ENCODE measurements at regions of chr7 and their contacts with region 1.

Region 1: GRCh38 chr7:143240291-143241168 is 18.7 kb downstream of the TAS2R40 start:
- DNase-seq: peak; percentile 60
- H3K4me3 ChIP-seq: peak overlapping the region; percentile 21
- CTCF ChIP-seq: peak; percentile 76

Region 2: DNA sequence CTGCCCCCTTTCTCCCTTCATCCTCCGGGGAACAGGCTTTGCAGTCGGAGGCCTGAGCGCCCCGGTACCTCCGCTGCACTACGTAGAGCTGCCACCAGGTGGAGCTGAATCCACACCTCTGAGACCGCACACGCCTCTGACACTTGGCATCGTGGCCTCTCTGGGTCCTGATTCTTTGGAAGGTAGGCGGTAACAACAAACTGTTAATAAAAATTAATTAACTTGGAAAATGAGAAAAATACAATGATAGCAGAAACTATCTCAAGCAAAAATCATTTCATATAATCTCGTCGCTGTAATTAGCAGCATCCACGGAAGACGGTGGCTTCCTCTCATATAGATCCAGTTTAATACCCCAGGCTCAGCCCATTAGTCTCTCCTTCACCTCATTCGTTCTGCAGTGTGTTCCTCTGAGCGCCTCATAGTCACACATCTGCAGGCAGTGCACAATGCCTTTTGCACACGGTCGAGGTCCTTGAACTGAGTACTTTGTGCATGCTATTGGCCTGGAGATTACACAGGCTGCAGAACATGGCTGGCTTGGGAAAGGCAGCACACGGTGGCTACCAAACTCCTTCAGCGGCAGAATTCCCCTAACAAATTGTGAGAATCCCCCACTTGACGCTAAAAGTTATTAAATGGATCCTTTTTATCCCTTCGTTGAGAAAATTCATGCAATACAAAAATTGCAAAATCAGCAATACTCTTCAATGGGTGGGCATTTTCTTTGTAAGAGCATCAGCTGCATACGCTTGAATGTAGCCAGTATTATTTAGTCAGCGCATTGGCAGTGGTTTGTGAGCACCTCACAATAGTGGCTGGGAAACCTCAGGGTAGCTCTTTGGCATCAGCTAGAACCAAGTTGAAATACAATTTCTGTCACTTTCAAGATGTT is 232.3 kb before region 1 on chr7:
- CTCF ChIA-PET with region 1: interaction called, 15 read pairs
- POLR2A ChIA-PET with region 1: no interaction called
- DNase-seq: no peak
- H3K4me3 ChIP-seq: no peak overlapping the region
- CTCF ChIP-seq: peak; percentile 97

Region 3: DNA sequence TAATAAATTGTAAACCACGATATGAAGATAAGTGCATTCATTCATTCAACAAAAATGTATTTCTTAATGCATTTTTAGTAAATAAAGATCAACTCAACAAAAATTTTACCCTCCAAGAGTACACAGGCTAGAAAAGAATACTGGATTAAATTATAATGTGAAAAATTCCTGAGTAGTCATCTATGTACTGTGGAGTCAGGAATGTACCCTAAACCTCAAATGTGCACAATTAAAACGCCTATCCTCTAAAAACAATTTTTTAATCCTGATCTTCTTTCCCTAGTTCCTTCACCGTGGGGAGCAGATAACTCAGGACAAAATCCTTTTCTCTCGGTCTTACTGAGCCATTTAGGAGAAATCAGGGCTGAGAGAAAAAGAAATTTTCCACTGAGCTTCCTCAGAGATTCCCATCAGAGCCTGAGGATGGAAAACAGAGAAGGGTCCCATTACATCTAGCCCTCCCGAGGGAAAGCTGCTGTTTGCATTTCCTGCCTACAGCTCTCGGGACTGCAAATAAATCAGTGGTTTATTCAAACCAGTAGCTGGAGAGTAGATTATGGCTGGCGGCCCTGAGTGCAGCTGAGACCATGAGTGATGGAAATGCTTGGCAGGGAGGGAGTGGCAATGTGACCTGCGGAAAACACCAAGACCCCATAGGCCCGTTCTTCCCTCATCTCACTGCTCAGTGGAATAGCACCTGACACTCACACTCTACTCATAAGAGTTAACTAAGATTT is 11.3 kb before region 1 on chr7:
- CTCF ChIA-PET with region 1: interaction called, 16 read pairs
- POLR2A ChIA-PET with region 1: no interaction called
- DNase-seq: no peak
- H3K4me3 ChIP-seq: no peak overlapping the region
- CTCF ChIP-seq: no peak

Region 4: GRCh38 chr7:143287935-143288826 is 47.7 kb after region 1 on chr7 and contains the start of gene CASP2:
- CTCF ChIA-PET with region 1: interaction called, 12 read pairs
- POLR2A ChIA-PET with region 1: interaction called, 3 read pairs
- DNase-seq: peak; percentile 63
- H3K4me3 ChIP-seq: peak within 1 kb of the TSS; percentile 88
- CTCF ChIP-seq: peak; percentile 48

Region 5: DNA sequence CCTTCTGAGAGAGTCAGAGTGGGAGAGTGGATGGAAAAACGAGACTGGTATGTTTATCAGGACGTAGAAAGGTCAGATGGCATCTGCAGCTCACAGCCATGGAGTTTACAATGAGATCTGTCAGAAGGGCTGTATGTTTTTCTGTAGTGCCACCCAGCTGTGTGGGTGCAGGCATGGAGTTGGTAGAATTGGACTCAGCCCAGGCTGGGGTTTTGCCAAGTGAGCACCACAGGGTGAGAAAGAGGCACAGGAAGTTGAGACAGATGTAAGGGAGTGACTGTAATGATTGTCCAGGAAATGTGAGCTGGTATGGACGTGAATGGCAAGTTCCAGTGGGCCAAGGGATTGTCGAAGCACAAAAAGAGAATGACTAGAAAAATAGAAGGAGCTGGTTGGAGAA is 131.5 kb after region 1 on chr7:
- CTCF ChIA-PET with region 1: interaction called, 10 read pairs
- POLR2A ChIA-PET with region 1: no interaction called
- DNase-seq: no peak
- H3K4me3 ChIP-seq: no peak overlapping the region
- CTCF ChIP-seq: no peak

Region 6: DNA sequence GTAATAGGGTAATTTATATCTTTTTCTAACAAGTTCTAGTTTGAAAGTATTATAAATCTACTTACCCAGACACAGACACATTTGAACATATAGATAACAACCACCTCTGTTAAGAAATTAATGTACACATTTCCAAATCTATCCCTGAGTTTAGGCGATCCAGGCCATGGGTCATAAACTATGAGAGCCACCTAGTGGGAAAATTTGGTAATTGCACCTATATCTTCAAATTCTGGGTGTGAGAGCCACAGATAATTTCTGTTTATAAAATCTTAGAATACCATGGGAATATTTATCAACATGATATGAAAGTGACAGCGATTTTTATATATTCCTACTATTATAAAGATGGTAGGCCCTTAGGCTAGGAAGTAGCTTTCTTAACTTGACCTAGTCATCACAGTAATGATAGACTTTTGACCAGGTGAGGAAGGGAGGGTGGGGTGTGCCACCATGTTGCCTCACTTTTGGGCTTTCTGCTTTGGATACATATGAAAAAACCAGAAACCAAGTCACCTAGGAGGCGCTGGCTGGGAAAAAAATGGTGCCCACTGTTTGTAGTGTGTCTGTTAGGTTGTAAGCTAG is 176.1 kb after region 1 on chr7:
- CTCF ChIA-PET with region 1: interaction called, 79 read pairs
- POLR2A ChIA-PET with region 1: no interaction called
- DNase-seq: no peak
- H3K4me3 ChIP-seq: no peak overlapping the region
- CTCF ChIP-seq: peak; percentile 48

Region 7: DNA sequence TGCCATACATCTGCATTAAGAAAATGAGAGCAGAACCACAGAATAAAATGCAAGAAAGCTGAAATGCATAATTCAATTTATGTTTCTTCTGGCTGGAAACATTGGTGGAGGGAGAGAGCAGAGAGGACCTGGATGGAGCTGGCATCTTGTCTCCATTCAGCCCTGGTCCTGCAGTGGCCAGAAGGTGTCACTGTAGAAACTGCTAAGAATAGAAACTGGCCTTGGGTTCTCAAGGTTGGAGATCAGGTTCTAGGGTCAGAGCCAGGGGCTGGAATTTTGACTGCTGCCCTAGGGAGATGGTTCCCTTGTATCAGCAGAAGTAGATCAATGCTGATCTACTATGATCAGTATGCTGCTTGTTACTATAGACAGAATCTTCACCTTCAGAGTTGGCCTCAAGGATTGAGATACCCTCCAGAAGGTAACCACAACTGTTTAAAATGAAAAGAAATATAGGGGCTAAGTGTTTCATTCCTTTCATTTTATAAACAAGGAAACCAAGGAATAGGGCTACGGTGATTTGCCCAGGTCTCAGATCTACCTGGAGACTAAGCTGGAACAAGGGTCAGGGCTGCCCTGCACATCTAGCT is 250.3 kb after region 1 on chr7:
- CTCF ChIA-PET with region 1: interaction called, 10 read pairs
- POLR2A ChIA-PET with region 1: no interaction called
- DNase-seq: no peak
- H3K4me3 ChIP-seq: no peak overlapping the region
- CTCF ChIP-seq: peak; percentile 55

Measured in AG04449 (cell line).